GM13976 (cell line): ENCODE measurements at regions of chr1 and their contacts with region 1.

Region 1: DNA sequence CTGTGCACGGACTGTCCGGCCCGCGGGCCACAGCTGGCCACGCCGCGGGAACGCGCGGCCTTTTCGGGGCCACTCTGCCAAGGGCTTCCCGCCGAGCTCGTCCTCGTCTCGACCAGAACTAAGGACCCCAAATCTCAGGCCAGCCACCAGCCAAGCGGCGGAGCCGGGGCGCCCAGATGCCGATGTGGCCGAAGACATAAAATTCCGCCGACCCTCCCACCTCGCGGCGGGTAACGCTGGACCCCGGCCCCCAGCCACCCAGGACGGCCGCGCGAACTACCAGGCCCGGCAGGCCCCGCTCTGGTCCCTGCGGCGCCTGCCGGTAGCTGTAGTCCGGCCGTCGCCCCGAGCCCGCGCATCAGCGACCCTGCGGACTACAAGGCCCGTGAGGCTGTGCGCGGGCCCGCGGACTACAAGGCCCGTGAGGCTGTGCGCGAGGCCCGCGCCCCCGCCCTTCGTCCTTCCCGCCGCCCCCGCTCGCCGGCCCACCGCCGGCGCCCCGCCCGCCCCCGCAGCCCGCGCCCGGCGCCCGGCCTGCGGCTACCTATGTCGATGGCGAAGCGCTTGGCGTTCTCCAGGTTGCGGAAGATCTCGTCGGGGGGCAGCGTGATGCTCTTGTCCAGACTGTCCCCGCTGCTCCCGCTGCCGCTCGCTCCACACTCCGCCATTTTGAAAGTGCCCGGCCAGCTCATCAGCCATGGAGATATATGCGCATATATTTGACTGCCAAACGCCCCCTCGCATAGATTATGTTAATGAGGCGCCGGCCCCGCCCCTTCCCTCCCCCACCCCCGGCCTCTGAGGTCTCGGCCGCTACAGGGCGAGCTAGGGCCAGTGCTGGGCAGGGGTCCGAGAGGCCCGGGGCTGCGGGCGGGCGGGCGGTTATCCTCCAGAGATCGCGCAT is at the start of gene PANK4:
- DNase-seq: peak; percentile 93
- CTCF ChIP-seq: no peak

Region 2: GRCh38 chr1:2330511-2331199 is 195.5 kb before region 1 on chr1:
- in situ Hi-C with region 1: no loop called
- DNase-seq: no peak
- CTCF ChIP-seq: no peak

Region 3: DNA sequence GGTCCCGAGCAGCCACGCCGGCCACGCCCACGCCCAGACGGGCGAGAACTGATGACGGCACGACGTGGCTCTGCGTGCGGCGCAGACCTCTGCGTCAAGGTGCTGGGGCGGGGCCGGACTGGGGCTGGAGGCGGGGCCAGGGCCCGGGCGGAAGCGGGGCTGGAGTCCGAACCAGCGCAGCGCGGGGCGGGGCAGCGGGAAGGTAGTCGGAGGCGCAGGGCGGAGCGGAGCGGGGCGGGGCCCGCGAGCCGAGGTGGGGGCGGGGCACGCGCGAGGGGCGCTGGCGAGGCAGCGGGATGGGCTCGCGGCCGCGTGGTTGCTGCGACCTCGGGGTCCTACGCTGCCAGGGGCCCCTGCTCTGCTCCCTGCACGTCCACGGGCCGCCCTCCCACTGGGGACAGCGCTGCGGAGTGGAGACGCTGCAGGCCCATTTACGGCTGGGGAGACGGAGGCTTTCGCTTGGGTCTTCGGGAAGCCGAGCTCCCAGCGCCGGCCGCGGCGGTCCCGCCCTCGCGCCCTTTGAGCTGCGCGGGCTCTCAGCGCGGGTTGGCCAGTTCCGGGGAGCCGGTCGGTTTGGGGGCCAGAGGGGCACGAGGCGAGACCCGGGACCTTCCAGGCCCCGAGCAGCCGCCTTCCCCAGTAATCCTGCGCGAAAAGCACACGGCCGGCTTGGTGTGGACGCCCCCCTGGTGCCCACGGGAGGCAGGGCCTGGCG is 113.5 kb before region 1 on chr1 and contains the start of gene PEX10:
- in situ Hi-C with region 1: loop called (anchors 25 kb)
- DNase-seq: peak; percentile 99
- CTCF ChIP-seq: no peak

Region 4: GRCh38 chr1:3213725-3214124 is 687.6 kb after region 1 on chr1:
- in situ Hi-C with region 1: no loop called
- DNase-seq: no peak
- CTCF ChIP-seq: no peak